Caco-2 (cell line): ENCODE measurements at regions of chr4 and their contacts with region 1.

Region 1: DNA sequence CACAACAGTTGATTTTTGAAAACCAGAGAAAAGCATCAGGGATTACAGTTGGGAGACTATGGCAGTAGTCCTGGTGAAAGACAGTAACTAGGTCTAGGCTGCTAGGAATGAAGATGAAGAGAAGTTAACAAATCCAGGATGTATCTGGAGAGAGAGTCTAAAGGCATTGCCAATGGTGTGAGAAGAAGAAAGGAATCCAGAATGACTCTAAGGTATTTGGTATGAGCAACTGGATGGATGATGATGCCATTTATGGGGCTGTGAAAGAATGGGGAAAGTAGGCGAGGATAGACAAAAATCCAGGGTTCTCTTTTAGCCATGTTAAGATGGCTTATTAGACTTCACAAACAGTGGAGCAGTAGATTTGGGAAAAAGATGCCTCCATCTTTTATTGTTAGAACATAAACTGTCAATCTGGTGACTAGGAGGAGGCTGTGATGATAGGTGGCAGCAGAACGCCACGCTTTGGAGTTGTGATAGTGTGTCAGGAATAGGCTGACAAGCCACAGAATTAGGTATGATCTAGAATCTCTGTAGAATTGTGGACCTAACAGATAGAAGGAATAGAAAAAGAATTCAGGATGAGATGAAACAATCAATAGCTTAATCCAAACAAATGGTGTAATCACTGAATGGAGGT is 27.3 kb upstream of the JADE1 start:
- DNase-seq: peak; percentile 58 to 62
- H3K4me3 ChIP-seq: no peak overlapping the region
- H3K4me3 Mint-ChIP-seq: no peak overlapping the region
- H3K27ac Mint-ChIP-seq: no peak overlapping the region
- H3K4me1 ChIP-seq: peaks cover 3% of the 10 kb centered on the region
- H3K4me1 Mint-ChIP-seq: peaks cover 3% of the 10 kb centered on the region
- H3K27me3 ChIP-seq: no peaks in the 10 kb centered on the region
- H3K27me3 Mint-ChIP-seq: no peaks in the 10 kb centered on the region
- CTCF ChIP-seq: peak; percentile 41 to 45

Region 2: GRCh38 chr4:128394778-128395177 is 387.4 kb before region 1 on chr4:
- CTCF ChIA-PET with region 1: no interaction called
- POLR2A ChIA-PET with region 1: no interaction called
- intact Hi-C with region 1: no loop called
- DNase-seq: no peak
- H3K4me3 ChIP-seq: no peak overlapping the region
- H3K4me3 Mint-ChIP-seq: no peak overlapping the region
- H3K27ac Mint-ChIP-seq: no peak overlapping the region
- H3K4me1 ChIP-seq: no peaks in the 10 kb centered on the region
- H3K4me1 Mint-ChIP-seq: peaks cover 5% of the 10 kb centered on the region
- H3K27me3 ChIP-seq: no peaks in the 10 kb centered on the region
- H3K27me3 Mint-ChIP-seq: no peaks in the 10 kb centered on the region
- CTCF ChIP-seq: no peak

Region 3: GRCh38 chr4:128803783-128804182 is 21.6 kb after region 1 on chr4:
- CTCF ChIA-PET with region 1: no interaction called
- POLR2A ChIA-PET with region 1: no interaction called
- intact Hi-C with region 1: no loop called
- DNase-seq: no peak
- H3K4me3 ChIP-seq: no peak overlapping the region
- H3K4me3 Mint-ChIP-seq: no peak overlapping the region
- H3K27ac Mint-ChIP-seq: no peak overlapping the region
- H3K4me1 ChIP-seq: peaks cover 45% of the 10 kb centered on the region
- H3K4me1 Mint-ChIP-seq: peaks cover 16% of the 10 kb centered on the region
- H3K27me3 ChIP-seq: no peaks in the 10 kb centered on the region
- H3K27me3 Mint-ChIP-seq: no peaks in the 10 kb centered on the region
- CTCF ChIP-seq: no peak

Region 4: GRCh38 chr4:128863312-128864075 is 81.3 kb after region 1 on chr4:
- CTCF ChIA-PET with region 1: no interaction called
- POLR2A ChIA-PET with region 1: no interaction called
- intact Hi-C with region 1: loop called (anchors 1 kb)
- DNase-seq: peak; percentile 73 to 77
- H3K4me3 ChIP-seq: no peak overlapping the region
- H3K4me3 Mint-ChIP-seq: no peak overlapping the region
- H3K27ac Mint-ChIP-seq: peak overlapping the region; percentile 40
- H3K4me1 ChIP-seq: no peaks in the 10 kb centered on the region; the same call in 1 of the 2 replicates
- H3K4me1 Mint-ChIP-seq: peaks cover 23% of the 10 kb centered on the region
- H3K27me3 ChIP-seq: no peaks in the 10 kb centered on the region
- H3K27me3 Mint-ChIP-seq: no peaks in the 10 kb centered on the region
- CTCF ChIP-seq: peak; percentile 77 to 84

Region 5: GRCh38 chr4:128930051-128930450 is 147.9 kb after region 1 on chr4:
- CTCF ChIA-PET with region 1: no interaction called
- POLR2A ChIA-PET with region 1: interaction called, 13 read pairs
- intact Hi-C with region 1: no loop called
- DNase-seq: no peak
- H3K4me3 ChIP-seq: no peak overlapping the region
- H3K4me3 Mint-ChIP-seq: no peak overlapping the region
- H3K27ac Mint-ChIP-seq: no peak overlapping the region
- H3K4me1 ChIP-seq: no peaks in the 10 kb centered on the region
- H3K4me1 Mint-ChIP-seq: no peaks in the 10 kb centered on the region
- H3K27me3 ChIP-seq: no peaks in the 10 kb centered on the region
- H3K27me3 Mint-ChIP-seq: no peaks in the 10 kb centered on the region
- CTCF ChIP-seq: no peak